ENCODE measurements at regions of chr11 and their contacts with region 1.

Region 1: GRCh38 chr11:104333977-104334376 is 170.0 kb upstream of the PDGFD start:
- DNase-seq: peak; percentile 41
- H3K4me3 ChIP-seq: no peak overlapping the region
- H3K27ac ChIP-seq: no peak overlapping the region
- H3K4me1 ChIP-seq: no peaks in the 10 kb centered on the region
- CTCF ChIP-seq: peak; percentile 80

Region 2: GRCh38 chr11:103927535-103927934 is 406.4 kb before region 1 on chr11:
- CTCF ChIA-PET with region 1: no interaction called
- POLR2A ChIA-PET with region 1: no interaction called
- intact Hi-C with region 1: loop called (anchors 5 kb)
- DNase-seq: peak; percentile 28
- H3K4me3 ChIP-seq: no peak overlapping the region
- H3K27ac ChIP-seq: no peak overlapping the region
- H3K4me1 ChIP-seq: peaks cover 20% of the 10 kb centered on the region
- CTCF ChIP-seq: peak; percentile 75

Region 3: GRCh38 chr11:104151404-104152204 is 182.4 kb before region 1 on chr11:
- CTCF ChIA-PET with region 1: no interaction called
- POLR2A ChIA-PET with region 1: no interaction called
- intact Hi-C with region 1: loop called (anchors 5 kb)
- DNase-seq: peak; percentile 38
- H3K4me3 ChIP-seq: no peak overlapping the region
- H3K27ac ChIP-seq: no peak overlapping the region
- H3K4me1 ChIP-seq: peaks cover 21% of the 10 kb centered on the region
- CTCF ChIP-seq: peak; percentile 82

Region 4: DNA sequence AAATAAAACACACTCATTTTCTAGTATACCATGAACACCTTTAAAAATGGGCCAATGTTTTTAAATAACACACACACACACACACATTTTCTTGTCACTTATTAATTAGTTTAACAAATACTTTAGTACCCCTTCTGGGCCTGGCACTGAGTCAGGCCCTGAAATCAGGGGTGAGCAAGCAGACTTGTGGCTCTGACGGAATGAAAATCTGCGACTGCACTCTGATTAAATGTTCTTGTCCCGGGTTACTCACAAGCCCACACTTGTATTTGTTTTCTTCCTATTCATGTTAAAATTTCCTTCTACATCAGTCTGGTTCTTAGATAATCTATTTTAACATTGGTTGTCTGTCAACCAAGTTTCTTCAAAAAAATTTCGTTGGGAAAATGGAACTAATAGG is 127.0 kb before region 1 on chr11:
- CTCF ChIA-PET with region 1: no interaction called
- POLR2A ChIA-PET with region 1: no interaction called
- intact Hi-C with region 1: no loop called
- DNase-seq: no peak
- H3K4me3 ChIP-seq: no peak overlapping the region
- H3K27ac ChIP-seq: no peak overlapping the region
- H3K4me1 ChIP-seq: no peaks in the 10 kb centered on the region
- CTCF ChIP-seq: no peak

Region 5: DNA sequence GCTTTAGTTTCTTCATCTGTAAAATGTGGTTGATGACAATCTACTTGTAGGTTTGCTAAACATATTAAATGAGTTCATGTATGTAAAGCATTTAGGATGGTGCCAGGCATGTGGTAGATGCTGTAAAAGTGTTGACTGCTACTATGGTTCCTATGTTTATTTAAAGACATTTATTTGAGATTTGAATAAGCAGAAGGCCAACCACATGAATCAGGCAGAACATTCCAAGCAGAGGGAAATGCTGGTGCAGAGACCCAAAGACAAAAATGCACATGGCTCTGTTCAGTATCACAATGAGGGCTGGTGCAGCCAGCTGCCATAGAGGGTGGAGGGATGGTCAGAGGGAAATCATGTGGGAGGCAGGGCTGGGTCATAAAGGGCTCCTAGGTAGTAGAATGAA is 13.9 kb before region 1 on chr11:
- CTCF ChIA-PET with region 1: no interaction called
- POLR2A ChIA-PET with region 1: no interaction called
- intact Hi-C with region 1: no loop called
- DNase-seq: no peak
- H3K4me3 ChIP-seq: no peak overlapping the region
- H3K27ac ChIP-seq: no peak overlapping the region
- H3K4me1 ChIP-seq: no peaks in the 10 kb centered on the region
- CTCF ChIP-seq: no peak